GM10248 (cell line): ENCODE measurements at regions of chr2 and their contacts with region 1.

Region 1: GRCh38 chr2:197986977-197987376 is 182.6 kb downstream of the PLCL1 start:
- DNase-seq: no peak
- CTCF ChIP-seq: no peak

Region 2: GRCh38 chr2:197975931-197976519 is 11.0 kb before region 1 on chr2:
- CTCF ChIA-PET with region 1: interaction called, 13 read pairs
- POLR2A ChIA-PET with region 1: no interaction called
- DNase-seq: no peak
- CTCF ChIP-seq: no peak